Ovary (tissue), 10 donors: ENCODE measurements at regions of chr2 and their contacts with region 1.

Region 1: DNA sequence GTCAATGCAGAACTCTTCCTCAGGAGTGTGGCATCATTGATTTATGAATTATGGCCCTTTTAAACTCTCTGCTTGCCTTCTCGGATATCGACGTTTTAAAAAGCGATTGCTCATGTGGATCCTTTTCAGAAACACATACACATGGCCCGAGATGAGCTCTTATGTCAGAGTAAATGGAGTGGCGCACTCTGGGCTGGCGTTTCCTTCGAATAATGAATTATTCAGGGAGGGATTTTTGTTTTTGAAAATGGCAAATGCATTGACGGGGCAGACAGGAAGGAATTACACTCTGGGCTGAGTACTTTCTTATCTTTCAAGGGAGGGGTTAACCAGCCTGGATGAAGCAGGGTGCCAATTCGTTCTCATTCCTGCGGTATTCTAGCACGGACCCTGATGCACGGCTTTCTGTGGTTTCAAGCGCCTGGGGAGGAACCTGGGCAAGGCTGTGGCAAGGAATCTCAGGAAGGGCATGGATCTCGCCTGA is 142.7 kb downstream of the PRKCE start:
- DNase-seq: no peak
- H3K4me3 ChIP-seq: no peak overlapping the region
- H3K27ac ChIP-seq: no peak overlapping the region
- H3K4me1 ChIP-seq: peaks cover 6% of the 10 kb centered on the region
- H3K27me3 ChIP-seq: no peaks in the 10 kb centered on the region
- CTCF ChIP-seq: no peak
- EP300 ChIP-seq: no peak
- POLR2A ChIP-seq: no peak

Region 2: DNA sequence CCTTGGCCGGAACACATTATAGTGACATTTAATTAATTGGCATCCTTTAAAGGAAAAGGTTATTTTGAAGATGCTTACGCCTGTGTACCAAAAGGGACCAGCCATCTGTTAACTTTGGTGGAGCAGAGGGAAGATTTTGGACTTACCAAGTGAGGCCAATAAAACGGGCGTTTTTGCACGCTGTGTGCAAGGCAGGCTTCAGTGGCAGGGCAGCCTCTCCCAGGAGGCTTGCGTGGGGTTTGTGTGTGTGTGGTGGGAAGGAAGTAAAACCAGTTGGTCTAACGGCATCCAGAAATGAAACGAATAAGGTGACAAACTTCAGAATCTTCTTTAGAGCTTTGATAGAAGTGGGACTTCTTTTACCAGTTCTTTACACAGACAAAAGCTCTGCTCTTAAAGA is 49.0 kb after region 1 on chr2:
- intact Hi-C with region 1: no loop called
- DNase-seq: no peak
- H3K4me3 ChIP-seq: no peak overlapping the region
- H3K27ac ChIP-seq: no peak overlapping the region
- H3K4me1 ChIP-seq: peaks cover 8% of the 10 kb centered on the region
- H3K27me3 ChIP-seq: no peaks in the 10 kb centered on the region
- CTCF ChIP-seq: no peak
- EP300 ChIP-seq: no peak
- POLR2A ChIP-seq: no peak

Region 3: GRCh38 chr2:45860136-45861121 is 66.3 kb after region 1 on chr2:
- intact Hi-C with region 1: loop called in 1 of 4 experiments (anchors 5 kb)
- DNase-seq: peak; percentile 71 to 82 (median 75)
- H3K4me3 ChIP-seq: peak overlapping the region; percentile 34
- H3K27ac ChIP-seq: peak overlapping the region; percentile 1 to 48
- H3K4me1 ChIP-seq: peaks cover 10% of the 10 kb centered on the region
- H3K27me3 ChIP-seq: no peaks in the 10 kb centered on the region
- CTCF ChIP-seq: no peak
- EP300 ChIP-seq: no peak
- POLR2A ChIP-seq: no peak

Region 4: DNA sequence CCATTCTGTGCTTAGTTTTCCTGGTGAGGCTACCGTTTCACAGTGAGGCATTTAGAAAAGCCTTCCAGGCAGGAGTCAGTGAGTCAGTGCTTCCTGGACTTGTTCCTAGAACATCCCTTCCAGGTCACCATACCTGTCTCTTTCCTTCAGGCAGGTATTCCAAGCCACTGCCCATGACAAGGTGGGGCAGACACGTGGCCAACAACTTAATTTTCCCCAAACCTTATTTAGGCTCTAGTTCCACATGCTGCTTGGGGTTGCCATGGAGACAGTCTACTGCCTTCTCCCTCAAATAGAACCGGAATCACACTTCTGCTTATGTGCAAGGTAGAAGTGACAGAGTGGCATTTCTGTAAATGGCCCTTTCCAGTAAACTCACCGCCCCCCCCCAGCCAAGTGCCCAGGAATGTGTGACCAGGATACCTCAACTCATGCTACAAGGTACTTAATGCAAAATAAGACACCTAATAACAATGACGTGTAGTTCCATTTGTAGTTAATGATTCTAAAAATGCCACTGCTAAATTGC is 115.6 kb after region 1 on chr2:
- intact Hi-C with region 1: no loop called
- DNase-seq: no peak
- H3K4me3 ChIP-seq: no peak overlapping the region
- H3K27ac ChIP-seq: no peak overlapping the region
- H3K4me1 ChIP-seq: peaks cover 4% of the 10 kb centered on the region
- H3K27me3 ChIP-seq: no peaks in the 10 kb centered on the region
- CTCF ChIP-seq: no peak
- EP300 ChIP-seq: no peak
- POLR2A ChIP-seq: no peak